Calu3 (cell line): ENCODE measurements at regions of chr4 and their contacts with region 1.

Region 1: DNA sequence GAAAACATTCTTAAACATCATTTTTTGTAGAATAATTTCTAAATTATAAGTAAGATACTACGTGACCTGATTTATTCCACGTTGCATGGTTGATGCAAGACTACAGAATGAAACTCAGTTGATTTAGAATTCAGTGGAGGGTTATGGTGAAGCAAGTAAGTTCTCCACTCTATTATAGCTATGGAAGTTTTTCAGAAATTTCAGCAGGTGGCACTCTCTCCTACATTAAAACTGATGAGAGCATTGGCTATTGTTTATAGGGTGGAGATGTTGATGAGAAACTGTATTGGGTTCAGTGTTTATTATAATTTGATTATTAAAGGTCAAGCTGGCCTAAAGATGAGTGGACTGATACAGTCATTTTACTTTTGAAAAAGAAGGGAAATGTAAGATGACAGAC is 88.0 kb downstream of the FNIP2 start:
- DNase-seq: no peak
- H3K4me3 Mint-ChIP-seq: no peak overlapping the region
- H3K27ac Mint-ChIP-seq: no peak overlapping the region
- H3K4me1 Mint-ChIP-seq: no peaks in the 10 kb centered on the region
- H3K27me3 Mint-ChIP-seq: no peaks in the 10 kb centered on the region
- CTCF ChIP-seq: no peak

Region 2: GRCh38 chr4:158682066-158682465 is 174.8 kb before region 1 on chr4:
- CTCF ChIA-PET with region 1: no interaction called
- intact Hi-C with region 1: no loop called
- DNase-seq: no peak
- H3K4me3 Mint-ChIP-seq: no peak overlapping the region
- H3K27ac Mint-ChIP-seq: no peak overlapping the region
- H3K4me1 Mint-ChIP-seq: no peaks in the 10 kb centered on the region
- H3K27me3 Mint-ChIP-seq: no peaks in the 10 kb centered on the region
- CTCF ChIP-seq: no peak

Region 3: DNA sequence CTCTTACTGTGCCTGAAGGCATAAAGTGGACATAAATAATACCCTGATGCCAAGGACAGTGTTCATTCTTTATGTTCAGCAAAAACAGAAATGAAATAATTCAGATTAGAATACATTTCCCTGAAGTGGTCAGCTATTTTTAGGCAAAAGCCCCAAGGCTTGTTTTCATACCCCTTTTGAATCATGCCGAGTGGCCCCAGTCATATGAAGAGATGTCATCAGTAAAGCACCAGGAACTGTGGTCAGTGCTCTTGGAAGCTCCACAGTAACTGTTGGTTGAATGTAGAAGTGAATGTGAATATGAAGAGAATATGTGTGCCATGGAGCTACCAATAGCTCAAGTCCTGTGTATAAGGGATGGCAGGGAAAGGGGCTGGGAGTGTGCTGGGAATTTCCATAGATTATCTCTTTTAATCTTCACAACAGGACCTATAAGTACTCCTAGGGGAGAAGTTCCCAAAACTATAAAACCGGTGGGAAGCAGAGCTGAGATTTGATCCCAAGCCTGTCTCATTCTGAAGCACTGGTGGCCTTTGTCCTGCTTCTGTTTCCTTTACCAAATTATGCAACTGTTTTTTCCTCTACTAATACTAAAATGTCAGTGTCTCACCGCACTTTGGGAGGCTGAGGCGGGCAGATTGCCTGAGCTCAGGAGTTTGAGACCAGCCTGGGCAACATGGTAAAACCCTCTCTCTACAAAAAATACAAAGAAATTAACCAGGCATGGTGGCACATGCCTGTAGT is 35.5 kb before region 1 on chr4:
- CTCF ChIA-PET with region 1: no interaction called
- intact Hi-C with region 1: no loop called
- DNase-seq: no peak
- H3K4me3 Mint-ChIP-seq: no peak overlapping the region
- H3K27ac Mint-ChIP-seq: peak overlapping the region; percentile 37
- H3K4me1 Mint-ChIP-seq: peaks cover 81% of the 10 kb centered on the region
- H3K27me3 Mint-ChIP-seq: no peaks in the 10 kb centered on the region
- CTCF ChIP-seq: no peak

Region 4: GRCh38 chr4:158895797-158896576 is 39.1 kb after region 1 on chr4:
- CTCF ChIA-PET with region 1: no interaction called
- intact Hi-C with region 1: no loop called
- DNase-seq: peak; percentile 23
- H3K4me3 Mint-ChIP-seq: no peak overlapping the region
- H3K27ac Mint-ChIP-seq: peak overlapping the region; percentile 36
- H3K4me1 Mint-ChIP-seq: no peaks in the 10 kb centered on the region
- H3K27me3 Mint-ChIP-seq: no peaks in the 10 kb centered on the region
- CTCF ChIP-seq: no peak

Region 5: DNA sequence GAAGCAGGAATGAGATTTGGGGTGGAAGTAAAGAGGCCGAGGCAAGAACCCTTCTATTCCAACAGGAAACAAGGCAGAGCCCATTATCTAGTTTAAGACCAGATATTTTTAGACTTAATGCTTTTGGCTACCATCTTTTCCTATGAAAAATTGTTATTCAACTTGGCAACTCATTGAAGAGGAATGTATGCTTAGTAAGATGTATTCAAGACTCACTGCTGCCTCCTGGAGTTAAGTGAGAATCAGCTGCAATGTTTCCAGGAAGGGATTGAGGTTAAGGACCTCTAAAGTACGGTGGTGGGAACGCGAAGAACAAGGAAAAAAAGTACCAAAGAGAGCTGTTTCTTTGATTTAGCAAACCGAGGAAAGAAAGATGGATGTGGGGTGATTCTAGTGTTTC is 335.1 kb after region 1 on chr4:
- CTCF ChIA-PET with region 1: interaction called, 3 read pairs
- intact Hi-C with region 1: loop called (anchors 1 kb)
- DNase-seq: peak; percentile 14
- H3K4me3 Mint-ChIP-seq: no peak overlapping the region
- H3K27ac Mint-ChIP-seq: no peak overlapping the region
- H3K4me1 Mint-ChIP-seq: no peaks in the 10 kb centered on the region
- H3K27me3 Mint-ChIP-seq: no peaks in the 10 kb centered on the region
- CTCF ChIP-seq: peak; percentile 29

Region 6: DNA sequence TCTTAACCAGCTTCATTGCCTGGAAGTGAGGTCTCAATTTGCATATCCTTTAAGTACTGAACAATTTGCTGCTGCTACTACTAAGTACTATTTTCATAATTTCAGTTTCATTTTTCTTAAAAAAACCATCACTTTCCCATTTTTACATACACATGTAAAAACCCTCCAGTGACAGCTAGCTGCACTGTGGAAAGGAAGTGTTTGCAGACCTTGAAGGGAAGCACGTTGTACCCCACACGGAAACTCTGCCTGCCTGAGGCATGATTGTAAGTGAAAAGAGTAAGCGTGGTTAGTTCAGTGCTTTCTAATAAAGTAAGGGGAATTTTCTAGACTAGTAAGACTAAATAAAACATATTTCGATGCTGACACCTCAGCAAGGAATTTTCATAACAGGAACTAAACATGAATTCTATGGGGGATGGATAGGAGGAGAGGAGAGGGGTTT is 349.6 kb after region 1 on chr4:
- CTCF ChIA-PET with region 1: interaction called, 4 read pairs
- intact Hi-C with region 1: loop called (anchors 1 kb)
- DNase-seq: no peak
- H3K4me3 Mint-ChIP-seq: no peak overlapping the region
- H3K27ac Mint-ChIP-seq: no peak overlapping the region
- H3K4me1 Mint-ChIP-seq: no peaks in the 10 kb centered on the region
- H3K27me3 Mint-ChIP-seq: no peaks in the 10 kb centered on the region
- CTCF ChIP-seq: no peak